Mammary epithelial cell (primary cell): ENCODE measurements at regions of chr1 and their contacts with region 1.

Region 1: DNA sequence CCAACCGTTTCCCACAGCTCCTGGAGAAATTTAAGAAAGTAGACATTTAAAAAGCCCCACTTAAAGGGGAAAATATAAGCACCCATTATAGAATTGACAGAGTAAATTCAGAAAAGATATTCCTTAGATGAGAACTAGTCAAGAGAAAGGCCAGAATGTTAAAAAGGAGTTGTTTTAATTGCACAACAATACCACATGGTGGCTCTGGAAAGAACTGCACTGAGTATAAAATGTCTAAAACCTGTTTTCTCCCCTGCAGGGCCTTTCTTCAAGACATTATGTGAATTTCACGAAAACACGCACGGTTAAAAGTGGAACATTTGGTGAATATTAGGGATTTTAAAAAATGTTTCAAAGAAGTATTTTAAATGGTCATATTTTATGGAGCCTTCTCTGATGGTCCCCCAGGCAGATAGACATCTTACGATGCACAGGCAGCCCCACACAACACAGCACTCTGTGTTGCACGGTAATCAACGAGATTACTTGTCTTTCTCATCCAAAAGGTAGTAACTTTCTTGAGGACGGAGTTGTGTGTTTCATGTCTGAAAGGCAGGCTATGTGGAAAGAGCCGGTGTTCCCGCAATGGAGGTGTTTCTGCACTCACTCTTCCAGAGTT is 101.9 kb downstream of the PRRX1 start:
- DNase-seq: peak; percentile 8
- H3K4me3 ChIP-seq: no peak overlapping the region
- H3K27ac ChIP-seq: no peak overlapping the region
- H3K4me1 ChIP-seq: no peaks in the 10 kb centered on the region
- H3K27me3 ChIP-seq: no peaks in the 10 kb centered on the region
- CTCF ChIP-seq: peak; percentile 51 to 66

Region 2: GRCh38 chr1:170010443-170010842 is 755.4 kb before region 1 on chr1:
- CTCF ChIA-PET with region 1: no interaction called
- dilution Hi-C with region 1: no loop called
- in situ Hi-C with region 1: no loop called
- intact Hi-C with region 1: loop called (anchors 2 kb)
- DNase-seq: no peak
- H3K4me3 ChIP-seq: no peak overlapping the region
- H3K27ac ChIP-seq: no peak overlapping the region
- H3K4me1 ChIP-seq: no peaks in the 10 kb centered on the region
- H3K27me3 ChIP-seq: no peaks in the 10 kb centered on the region
- CTCF ChIP-seq: peak; percentile 6 to 48

Region 3: DNA sequence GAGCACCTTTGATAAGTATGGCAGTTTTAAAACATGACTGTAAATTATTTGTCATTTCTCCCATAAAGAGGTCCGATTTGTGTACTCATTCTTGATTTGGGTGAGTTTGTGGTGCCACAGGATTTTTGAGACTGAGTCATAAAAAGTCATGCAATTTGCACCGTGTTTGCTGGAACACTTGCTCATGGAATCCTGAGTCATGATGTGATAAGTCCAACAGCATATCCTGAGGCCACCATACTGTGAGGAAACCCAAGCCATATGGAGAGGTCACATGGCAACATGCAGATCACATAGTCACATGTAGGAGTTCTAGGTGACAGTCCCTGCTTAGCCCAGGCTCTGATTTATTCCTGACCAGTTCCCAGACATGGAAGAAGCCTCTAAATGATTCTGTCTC is 142.7 kb before region 1 on chr1:
- CTCF ChIA-PET with region 1: no interaction called
- dilution Hi-C with region 1: no loop called
- in situ Hi-C with region 1: no loop called
- intact Hi-C with region 1: no loop called
- DNase-seq: peak; percentile 92
- H3K4me3 ChIP-seq: no peak overlapping the region
- H3K27ac ChIP-seq: peak overlapping the region; percentile 61
- H3K4me1 ChIP-seq: peaks cover 20% of the 10 kb centered on the region
- H3K27me3 ChIP-seq: no peaks in the 10 kb centered on the region
- CTCF ChIP-seq: no peak

Region 4: DNA sequence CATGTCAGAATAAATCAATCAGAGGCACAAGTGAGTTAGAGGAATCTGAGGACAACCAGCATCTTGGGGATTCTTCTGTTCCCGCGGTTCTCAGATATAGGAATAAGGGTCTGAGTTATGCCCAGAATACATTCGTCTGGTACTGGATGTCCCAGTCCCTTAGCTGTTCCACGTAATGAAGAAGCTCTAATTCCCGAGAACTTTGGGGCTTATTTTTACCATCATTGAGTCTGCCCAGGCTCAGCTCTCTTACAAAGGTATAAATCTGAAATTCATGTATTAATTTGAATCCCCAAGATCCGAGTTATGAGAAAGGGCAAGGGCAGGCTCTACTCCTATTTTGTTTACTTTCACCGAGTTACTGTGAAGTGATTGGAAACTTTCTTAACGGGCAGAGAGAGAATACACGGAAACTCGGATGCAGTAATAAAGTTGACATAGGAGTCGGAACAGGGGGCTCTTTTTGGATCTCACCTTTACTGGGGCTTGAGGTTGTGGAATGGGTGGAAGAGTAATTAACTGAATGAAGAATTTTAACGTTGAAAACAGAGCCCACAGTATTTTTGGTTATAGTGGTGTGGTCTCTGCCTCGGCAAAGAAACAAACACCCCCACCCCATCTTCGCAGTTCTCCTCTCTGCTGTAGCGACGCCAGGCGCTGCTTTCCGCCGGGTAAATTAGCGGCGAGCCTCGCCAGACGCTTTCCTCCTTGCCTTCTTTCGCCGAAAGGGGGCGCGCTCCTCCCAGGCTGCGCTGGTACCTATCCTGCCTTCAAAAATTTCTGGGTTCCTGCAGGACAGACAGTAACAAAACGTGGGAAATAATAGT is 94.8 kb before region 1 on chr1:
- CTCF ChIA-PET with region 1: no interaction called
- dilution Hi-C with region 1: no loop called
- in situ Hi-C with region 1: no loop called
- intact Hi-C with region 1: no loop called
- DNase-seq: no peak
- H3K4me3 ChIP-seq: no peak overlapping the region
- H3K27ac ChIP-seq: no peak overlapping the region
- H3K4me1 ChIP-seq: no peaks in the 10 kb centered on the region
- H3K27me3 ChIP-seq: peaks cover 3% of the 10 kb centered on the region
- CTCF ChIP-seq: no peak

Region 5: GRCh38 chr1:170692866-170693575 is 72.8 kb before region 1 on chr1:
- CTCF ChIA-PET with region 1: no interaction called
- dilution Hi-C with region 1: no loop called
- in situ Hi-C with region 1: no loop called
- intact Hi-C with region 1: loop called (anchors 1 kb)
- DNase-seq: peak; percentile 2
- H3K4me3 ChIP-seq: no peak overlapping the region
- H3K27ac ChIP-seq: no peak overlapping the region
- H3K4me1 ChIP-seq: peaks cover 11% of the 10 kb centered on the region
- H3K27me3 ChIP-seq: no peaks in the 10 kb centered on the region
- CTCF ChIP-seq: no peak

Region 6: GRCh38 chr1:170776777-170777176 is 11.0 kb after region 1 on chr1:
- CTCF ChIA-PET with region 1: interaction called, 39 read pairs
- dilution Hi-C with region 1: no loop called
- in situ Hi-C with region 1: no loop called
- intact Hi-C with region 1: no loop called
- DNase-seq: no peak
- H3K4me3 ChIP-seq: no peak overlapping the region
- H3K27ac ChIP-seq: no peak overlapping the region
- H3K4me1 ChIP-seq: no peaks in the 10 kb centered on the region
- H3K27me3 ChIP-seq: no peaks in the 10 kb centered on the region
- CTCF ChIP-seq: no peak

Region 7: GRCh38 chr1:170831276-170831675 is 65.5 kb after region 1 on chr1:
- CTCF ChIA-PET with region 1: no interaction called
- dilution Hi-C with region 1: no loop called
- in situ Hi-C with region 1: no loop called
- intact Hi-C with region 1: no loop called
- DNase-seq: no peak
- H3K4me3 ChIP-seq: no peak overlapping the region
- H3K27ac ChIP-seq: no peak overlapping the region
- H3K4me1 ChIP-seq: no peaks in the 10 kb centered on the region
- H3K27me3 ChIP-seq: no peaks in the 10 kb centered on the region
- CTCF ChIP-seq: no peak

Region 8: DNA sequence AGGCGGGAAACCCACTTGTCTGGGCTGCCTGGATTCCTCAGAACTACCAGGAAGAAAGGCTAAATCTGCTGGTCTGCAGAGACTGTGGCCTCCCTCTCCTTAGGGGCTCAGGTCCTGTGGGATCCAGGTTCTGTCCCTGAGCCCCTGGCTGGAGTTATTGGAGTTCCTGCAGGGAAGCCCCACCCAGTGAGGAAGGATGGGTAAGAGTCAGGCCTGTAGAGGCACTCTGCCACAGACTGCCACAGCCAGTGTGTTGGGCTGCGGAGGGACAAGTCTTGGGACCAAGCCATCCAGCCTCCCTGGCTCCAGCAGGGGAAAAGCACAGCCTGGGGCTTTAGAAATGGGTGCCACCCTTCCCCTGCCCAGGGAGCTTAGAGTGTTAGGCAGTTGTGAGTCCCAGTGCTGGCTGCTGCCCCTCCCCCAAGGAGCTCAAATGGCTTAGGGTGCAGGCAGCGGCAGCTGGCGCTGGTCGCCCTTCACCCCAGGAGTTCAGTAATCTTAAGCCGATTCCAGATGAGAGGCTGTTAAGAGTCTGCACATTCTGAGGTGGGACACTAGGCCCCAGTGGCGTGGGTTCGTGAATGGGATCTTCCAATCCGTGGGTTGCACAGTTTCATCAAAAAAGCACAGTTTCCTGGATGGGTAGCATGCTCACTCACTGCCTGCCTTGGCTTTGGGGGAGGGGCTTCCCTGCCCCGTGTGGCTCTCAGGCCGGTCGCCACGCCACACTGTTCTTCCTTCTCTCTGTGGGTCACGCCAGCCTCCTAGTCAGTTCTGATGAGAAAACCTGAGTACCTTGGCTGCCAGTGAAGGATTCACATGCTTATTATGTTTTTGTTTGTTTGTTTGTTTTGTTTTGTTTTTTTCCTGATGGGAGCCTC is 267.2 kb after region 1 on chr1:
- CTCF ChIA-PET with region 1: no interaction called
- dilution Hi-C with region 1: no loop called
- in situ Hi-C with region 1: no loop called
- intact Hi-C with region 1: no loop called
- DNase-seq: no peak
- H3K4me3 ChIP-seq: no peak overlapping the region
- H3K27ac ChIP-seq: no peak overlapping the region
- H3K4me1 ChIP-seq: no peaks in the 10 kb centered on the region
- H3K27me3 ChIP-seq: no peaks in the 10 kb centered on the region
- CTCF ChIP-seq: no peak